Activated B cell treated with CpG ODN at 0.5 μM for 24 hours (primary cell): ENCODE measurements at regions of chr18 and their contacts with region 1.

Region 1: DNA sequence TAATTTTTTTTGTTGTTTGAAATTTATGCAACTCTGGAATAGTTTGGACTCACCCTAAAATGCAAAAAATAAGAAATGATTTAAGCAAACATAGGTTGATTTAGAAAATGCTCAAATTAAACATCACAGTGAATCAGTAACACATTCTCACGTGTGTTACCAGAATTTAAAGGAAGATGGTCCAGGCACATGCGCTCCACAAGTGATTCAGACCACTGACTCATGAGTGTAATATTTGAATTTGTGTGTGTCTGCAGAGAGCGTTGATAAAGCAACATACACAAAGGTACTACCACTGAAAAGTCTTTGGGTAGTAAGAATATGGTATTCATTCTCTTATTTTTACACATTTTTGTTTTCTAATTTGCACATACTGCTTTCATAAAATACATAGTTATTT is 7.9 kb downstream of the SS18 start:
- DNase-seq: no peak
- ATAC-seq: no peak
- H3K4me3 Mint-ChIP-seq: no peak overlapping the region
- H3K27ac Mint-ChIP-seq: no peak overlapping the region
- H3K4me1 Mint-ChIP-seq: peaks cover 25% of the 10 kb centered on the region
- H3K27me3 Mint-ChIP-seq: no peaks in the 10 kb centered on the region
- CTCF ChIP-seq: no peak

Region 2: DNA sequence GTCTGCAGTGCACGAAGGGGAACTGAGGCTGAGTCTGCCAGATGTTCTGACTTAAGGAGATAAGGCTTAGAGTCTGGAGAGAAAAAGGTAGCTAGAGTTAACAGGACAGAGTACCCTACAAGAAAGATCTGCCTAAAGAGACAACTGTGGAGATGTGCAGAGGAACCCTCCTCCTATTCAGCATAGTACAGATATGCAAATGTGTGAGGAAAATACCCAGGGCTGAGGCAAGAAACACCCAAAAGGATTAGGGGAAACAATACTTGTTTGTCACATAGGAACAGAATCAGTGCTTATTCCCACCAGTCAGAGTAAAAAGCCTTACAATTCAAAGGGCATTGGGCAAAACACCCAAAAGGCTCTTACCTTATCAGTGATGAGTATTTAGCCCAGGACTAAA is 59.9 kb before region 1 on chr18:
- CTCF ChIA-PET with region 1: no interaction called
- POLR2A ChIA-PET with region 1: no interaction called
- intact Hi-C with region 1: loop called (anchors 5 kb)
- DNase-seq: no peak
- ATAC-seq: no peak
- H3K4me3 Mint-ChIP-seq: no peak overlapping the region
- H3K27ac Mint-ChIP-seq: peak overlapping the region; percentile 27
- H3K4me1 Mint-ChIP-seq: peaks cover 6% of the 10 kb centered on the region
- H3K27me3 Mint-ChIP-seq: no peaks in the 10 kb centered on the region
- CTCF ChIP-seq: no peak

Region 3: DNA sequence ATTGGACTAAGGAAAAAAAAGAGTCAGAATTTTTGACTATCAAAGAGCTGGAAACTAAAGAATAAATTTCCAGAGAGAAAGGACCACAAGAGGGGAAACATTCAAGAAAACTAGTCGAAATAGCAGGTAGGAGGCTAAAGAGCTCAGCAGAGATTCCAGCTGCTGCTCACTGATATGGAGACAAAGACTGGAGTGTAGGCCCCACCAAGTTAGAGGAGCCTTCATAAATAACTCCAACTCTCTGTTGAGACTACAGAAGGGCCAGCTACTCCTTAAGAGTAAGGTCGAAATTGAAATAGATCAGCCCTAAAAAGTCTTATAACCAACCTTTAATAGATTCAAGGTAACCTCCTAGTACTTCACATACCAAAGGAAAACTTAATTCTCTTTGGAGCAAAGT is 23.1 kb before region 1 on chr18:
- CTCF ChIA-PET with region 1: no interaction called
- POLR2A ChIA-PET with region 1: no interaction called
- intact Hi-C with region 1: loop called (anchors 2 kb)
- DNase-seq: no peak
- ATAC-seq: no peak
- H3K4me3 Mint-ChIP-seq: no peak overlapping the region
- H3K27ac Mint-ChIP-seq: no peak overlapping the region
- H3K4me1 Mint-ChIP-seq: peaks cover 15% of the 10 kb centered on the region
- H3K27me3 Mint-ChIP-seq: no peaks in the 10 kb centered on the region
- CTCF ChIP-seq: no peak